ENCODE measurements at regions of chr14 and their contacts with region 1.

Region 1: DNA sequence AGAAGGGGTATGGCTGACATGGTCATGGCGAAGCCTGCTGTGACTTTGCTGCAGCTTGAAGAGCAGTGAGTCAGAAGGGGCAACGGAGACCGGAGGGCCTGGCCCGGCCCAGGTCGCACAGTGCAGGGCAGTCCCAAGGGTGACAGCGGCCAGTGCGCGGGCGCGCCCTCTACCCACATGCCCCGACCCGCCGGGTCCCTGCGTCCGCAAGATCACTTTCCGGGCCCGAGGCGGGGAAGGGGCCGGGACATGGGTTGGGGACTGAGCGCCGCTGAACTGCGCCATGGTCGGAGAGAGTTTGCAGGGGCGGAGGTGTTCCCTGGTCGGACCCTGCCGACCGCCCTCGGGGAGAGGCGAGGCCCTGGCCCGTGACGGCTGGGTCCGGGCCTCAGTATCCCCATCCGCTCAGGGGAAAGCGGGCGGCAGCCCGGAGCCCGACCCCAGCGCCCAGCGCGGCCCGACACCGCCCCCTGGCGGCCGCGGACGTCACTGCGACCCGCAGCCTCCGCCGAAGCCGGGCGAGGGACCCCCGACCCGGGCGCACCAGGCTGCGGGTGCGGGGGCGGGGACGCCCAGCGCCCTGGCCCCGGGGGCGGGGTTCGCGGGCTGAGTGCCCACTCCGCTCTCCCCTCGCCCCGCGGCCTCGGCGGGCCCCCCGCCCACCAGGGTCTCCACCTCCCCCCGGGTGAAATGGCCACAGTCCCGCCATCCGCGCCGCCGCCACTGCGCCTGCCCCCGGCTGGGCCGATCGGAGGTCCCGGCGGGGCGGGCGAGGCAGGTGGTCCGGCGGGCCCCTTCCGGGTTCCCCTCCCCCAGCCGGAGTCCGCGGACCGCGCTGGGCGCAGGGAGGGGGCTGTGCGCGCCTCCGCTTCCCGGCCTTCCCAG is 7.2 kb upstream of the ANKRD9 start:
- DNase-seq: peak in 13 of 14 experiments; percentile 35 to 81 (median 54)
- ATAC-seq: peak; percentile 87
- H3K4me3 ChIP-seq: peak overlapping the region; percentile 53
- H3K4me3 Mint-ChIP-seq: peak overlapping the region; percentile 90
- H3K27ac ChIP-seq: no peak overlapping the region
- H3K27ac Mint-ChIP-seq: no peak overlapping the region
- H3K4me1 ChIP-seq: peaks cover 12% of the 10 kb centered on the region
- H3K4me1 Mint-ChIP-seq: peaks cover 4% of the 10 kb centered on the region
- H3K27me3 ChIP-seq: no peaks in the 10 kb centered on the region
- H3K27me3 Mint-ChIP-seq: peaks cover 4% of the 10 kb centered on the region
- CTCF ChIP-seq: peak; percentile 72

Region 2: DNA sequence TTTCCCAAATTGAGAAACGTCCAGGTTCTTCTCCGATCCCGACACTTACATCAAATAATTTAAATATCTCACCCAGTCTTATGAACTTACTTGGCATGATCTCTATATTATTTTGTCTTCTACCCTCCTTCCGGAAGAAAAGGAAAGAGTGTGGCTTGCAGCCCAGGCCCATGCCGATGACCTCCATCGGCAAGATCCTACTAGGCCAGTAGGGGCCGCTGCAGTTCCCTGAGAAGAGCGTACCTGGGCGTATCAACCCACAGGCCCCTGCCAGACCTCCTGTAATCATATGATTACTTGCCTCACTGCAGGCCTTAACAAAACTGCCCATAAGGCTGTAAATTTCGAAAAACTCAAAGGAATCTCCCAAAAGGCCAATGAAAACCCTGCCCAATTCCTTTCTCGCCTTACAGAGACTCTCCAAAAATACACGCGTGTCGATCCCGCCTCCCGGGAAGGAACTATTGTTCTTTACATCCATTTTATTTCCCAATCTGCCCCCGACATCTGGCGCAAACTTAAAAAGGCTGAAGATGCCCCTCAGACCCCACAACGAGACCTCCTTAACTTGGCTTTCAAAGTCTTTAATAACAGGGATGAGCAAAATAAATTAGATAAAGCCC is 281.4 kb before region 1 on chr14:
- CTCF ChIA-PET with region 1: no interaction called
- POLR2A ChIA-PET with region 1: no interaction called
- intact Hi-C with region 1: loop called in 1 of 2 experiments (anchors 2 kb)
- DNase-seq: peak; percentile 57 to 84 (median 68)
- ATAC-seq: peak; percentile 98
- H3K4me3 ChIP-seq: no peak overlapping the region
- H3K4me3 Mint-ChIP-seq: no peak overlapping the region
- H3K27ac ChIP-seq: no peak overlapping the region
- H3K27ac Mint-ChIP-seq: no peak overlapping the region
- H3K4me1 ChIP-seq: peaks cover 6% of the 10 kb centered on the region
- H3K4me1 Mint-ChIP-seq: no peaks in the 10 kb centered on the region
- H3K27me3 ChIP-seq: peaks cover 0 to 4% of the 10 kb centered on the region in 2 experiments
- H3K27me3 Mint-ChIP-seq: no peaks in the 10 kb centered on the region
- CTCF ChIP-seq: peak; percentile 77

Region 3: GRCh38 chr14:102362545-102363181 is 154.1 kb before region 1 on chr14 and contains the starts of genes CINP and TECPR2:
- CTCF ChIA-PET with region 1: no interaction called
- POLR2A ChIA-PET with region 1: no interaction called
- intact Hi-C with region 1: loop called in 1 of 2 experiments (anchors 5 kb)
- DNase-seq: peak; percentile 92 to 99 (median 96)
- ATAC-seq: peak; percentile 90
- H3K4me3 ChIP-seq: peak within 1 kb of the TSS; percentile 91
- H3K4me3 Mint-ChIP-seq: peak within 1 kb of the TSS; percentile 94
- H3K27ac ChIP-seq: peak within 1 kb of the TSS; percentile 74 to 89
- H3K27ac Mint-ChIP-seq: no peak within 1 kb of the TSS
- H3K4me1 ChIP-seq: peaks cover 27% of the 10 kb centered on the region
- H3K4me1 Mint-ChIP-seq: peaks cover 21% of the 10 kb centered on the region
- H3K27me3 ChIP-seq: no peaks in the 10 kb centered on the region
- H3K27me3 Mint-ChIP-seq: no peaks in the 10 kb centered on the region
- CTCF ChIP-seq: no peak
- total RNA-seq, gene CINP: 12.6 to 14.5 TPM
- total RNA-seq, gene TECPR2: 5.0 to 5.4 TPM

Region 4: DNA sequence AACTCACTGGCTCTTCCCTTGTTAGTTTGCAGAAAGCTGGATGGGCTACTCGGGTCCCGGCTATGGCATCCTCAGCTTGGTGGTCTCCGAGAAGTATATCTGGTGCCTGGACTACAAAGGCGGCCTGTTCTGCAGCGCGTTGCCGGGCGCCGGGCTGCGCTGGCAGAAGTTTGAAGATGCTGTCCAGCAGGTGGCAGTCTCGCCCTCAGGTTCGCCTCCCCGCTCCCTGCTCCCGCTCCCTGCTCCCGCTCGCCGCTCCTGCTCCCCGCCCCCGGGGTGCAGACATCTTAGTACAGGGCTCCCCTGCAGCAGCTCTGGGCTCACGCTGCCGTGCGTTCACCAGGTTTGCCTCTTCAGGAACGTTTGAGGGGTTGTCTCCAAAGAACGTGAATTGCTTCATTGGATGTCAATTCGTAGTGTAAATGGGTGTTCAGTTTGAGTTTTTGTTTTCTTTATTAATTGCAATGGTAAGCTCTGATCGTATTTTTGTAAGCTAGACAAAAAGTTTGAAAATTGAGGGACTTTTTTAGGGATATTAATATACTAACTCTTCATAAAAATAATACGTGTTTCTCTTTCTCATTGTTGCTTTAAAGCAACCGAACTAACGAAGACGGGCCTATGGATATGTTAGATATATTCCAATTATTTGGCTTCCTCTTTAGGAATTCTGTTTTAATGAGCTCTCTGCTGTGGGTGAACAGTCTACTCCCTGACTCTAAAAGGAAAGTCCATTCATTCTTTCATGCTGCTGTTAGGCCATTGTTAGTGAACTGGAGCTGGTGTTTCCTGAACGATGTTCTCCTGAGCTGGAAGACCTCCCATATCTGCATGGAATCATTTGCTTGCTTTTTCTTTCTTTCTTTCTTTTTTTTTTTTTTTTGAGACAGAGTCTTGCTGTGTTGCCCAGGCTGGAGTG is 78.5 kb before region 1 on chr14:
- CTCF ChIA-PET with region 1: interaction called, 13 read pairs
- POLR2A ChIA-PET with region 1: interaction called, 3 read pairs
- intact Hi-C with region 1: loop called (anchors 1 kb)
- DNase-seq: peak; percentile 32 to 87 (median 48)
- ATAC-seq: peak; percentile 56
- H3K4me3 ChIP-seq: no peak overlapping the region
- H3K4me3 Mint-ChIP-seq: no peak overlapping the region
- H3K27ac ChIP-seq: no peak overlapping the region
- H3K27ac Mint-ChIP-seq: no peak overlapping the region
- H3K4me1 ChIP-seq: peaks cover 3% of the 10 kb centered on the region
- H3K4me1 Mint-ChIP-seq: no peaks in the 10 kb centered on the region
- H3K27me3 ChIP-seq: no peaks in the 10 kb centered on the region
- H3K27me3 Mint-ChIP-seq: no peaks in the 10 kb centered on the region
- CTCF ChIP-seq: peak; percentile 80

Region 5: DNA sequence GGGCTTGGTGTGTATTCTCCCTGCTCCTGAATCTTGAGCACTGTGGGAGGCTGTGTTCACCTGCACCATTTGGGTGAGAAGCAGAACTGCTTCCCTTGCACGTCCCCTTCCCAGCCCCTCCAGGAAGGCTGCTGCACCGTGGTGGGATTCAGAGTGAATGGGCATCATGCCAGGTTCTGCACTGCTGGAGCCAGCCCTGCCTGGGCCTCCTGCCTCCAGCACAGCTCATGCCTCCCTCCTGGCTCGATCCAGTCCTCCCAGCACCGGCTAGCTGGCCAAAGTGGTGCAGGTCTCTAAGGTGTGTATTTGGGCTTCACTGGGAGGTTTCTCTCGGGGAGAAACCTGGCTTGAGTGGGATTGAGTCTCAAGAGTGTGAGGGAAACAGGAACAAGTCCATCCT is 62.0 kb before region 1 on chr14:
- CTCF ChIA-PET with region 1: no interaction called
- POLR2A ChIA-PET with region 1: no interaction called
- intact Hi-C with region 1: loop called in 1 of 2 experiments (anchors 5 kb)
- DNase-seq: no peak
- ATAC-seq: no peak
- H3K4me3 ChIP-seq: no peak overlapping the region
- H3K4me3 Mint-ChIP-seq: no peak overlapping the region
- H3K27ac ChIP-seq: no peak overlapping the region
- H3K27ac Mint-ChIP-seq: no peak overlapping the region
- H3K4me1 ChIP-seq: no peaks in the 10 kb centered on the region
- H3K4me1 Mint-ChIP-seq: no peaks in the 10 kb centered on the region
- H3K27me3 ChIP-seq: no peaks in the 10 kb centered on the region
- H3K27me3 Mint-ChIP-seq: no peaks in the 10 kb centered on the region
- CTCF ChIP-seq: no peak

Region 6: GRCh38 chr14:102474934-102475333 is 41.8 kb before region 1 on chr14:
- CTCF ChIA-PET with region 1: no interaction called
- POLR2A ChIA-PET with region 1: no interaction called
- intact Hi-C with region 1: no loop called
- DNase-seq: no peak
- ATAC-seq: no peak
- H3K4me3 ChIP-seq: no peak overlapping the region
- H3K4me3 Mint-ChIP-seq: no peak overlapping the region
- H3K27ac ChIP-seq: no peak overlapping the region
- H3K27ac Mint-ChIP-seq: no peak overlapping the region
- H3K4me1 ChIP-seq: peaks cover 7% of the 10 kb centered on the region
- H3K4me1 Mint-ChIP-seq: peaks cover 14% of the 10 kb centered on the region
- H3K27me3 ChIP-seq: no peaks in the 10 kb centered on the region
- H3K27me3 Mint-ChIP-seq: no peaks in the 10 kb centered on the region
- CTCF ChIP-seq: no peak